ENCODE measurements at regions of chr15 and their contacts with region 1.

Region 1: GRCh38 chr15:38563723-38564519 is 693 bp downstream of the RASGRP1 start:
- DNase-seq: peak; percentile 62
- H3K27ac ChIP-seq: no peak overlapping the region
- CTCF ChIP-seq: peak; percentile 94

Region 2: GRCh38 chr15:38440353-38441129 is 123.4 kb before region 1 on chr15:
- CTCF ChIA-PET with region 1: interaction called, 11 read pairs
- POLR2A ChIA-PET with region 1: no interaction called
- DNase-seq: peak; percentile 57
- H3K27ac ChIP-seq: no peak overlapping the region
- CTCF ChIP-seq: peak; percentile 98

Region 3: GRCh38 chr15:38610748-38611147 is 46.8 kb after region 1 on chr15:
- CTCF ChIA-PET with region 1: interaction called, 12 read pairs
- POLR2A ChIA-PET with region 1: no interaction called
- DNase-seq: no peak
- H3K27ac ChIP-seq: no peak overlapping the region
- CTCF ChIP-seq: no peak

Region 4: GRCh38 chr15:38647683-38648082 is 83.8 kb after region 1 on chr15:
- CTCF ChIA-PET with region 1: interaction called, 24 read pairs
- POLR2A ChIA-PET with region 1: no interaction called
- DNase-seq: peak; percentile 71
- H3K27ac ChIP-seq: no peak overlapping the region
- CTCF ChIP-seq: peak; percentile 41

Region 5: GRCh38 chr15:38690689-38691332 is 126.9 kb after region 1 on chr15:
- CTCF ChIA-PET with region 1: interaction called, 13 read pairs
- POLR2A ChIA-PET with region 1: no interaction called
- DNase-seq: peak; percentile 36
- H3K27ac ChIP-seq: no peak overlapping the region
- CTCF ChIP-seq: peak; percentile 89

Measured in RWPE1 (cell line).